Activated CD4-positive, alpha-beta T cell treated with anti-CD3 and anti-CD28 coated beads, Interleukin-2, amount 10 ng/mL, durations not matched to agents 24 days and 14 days (primary cell): ENCODE measurements at regions of chr2 and their contacts with region 1.

Region 1: DNA sequence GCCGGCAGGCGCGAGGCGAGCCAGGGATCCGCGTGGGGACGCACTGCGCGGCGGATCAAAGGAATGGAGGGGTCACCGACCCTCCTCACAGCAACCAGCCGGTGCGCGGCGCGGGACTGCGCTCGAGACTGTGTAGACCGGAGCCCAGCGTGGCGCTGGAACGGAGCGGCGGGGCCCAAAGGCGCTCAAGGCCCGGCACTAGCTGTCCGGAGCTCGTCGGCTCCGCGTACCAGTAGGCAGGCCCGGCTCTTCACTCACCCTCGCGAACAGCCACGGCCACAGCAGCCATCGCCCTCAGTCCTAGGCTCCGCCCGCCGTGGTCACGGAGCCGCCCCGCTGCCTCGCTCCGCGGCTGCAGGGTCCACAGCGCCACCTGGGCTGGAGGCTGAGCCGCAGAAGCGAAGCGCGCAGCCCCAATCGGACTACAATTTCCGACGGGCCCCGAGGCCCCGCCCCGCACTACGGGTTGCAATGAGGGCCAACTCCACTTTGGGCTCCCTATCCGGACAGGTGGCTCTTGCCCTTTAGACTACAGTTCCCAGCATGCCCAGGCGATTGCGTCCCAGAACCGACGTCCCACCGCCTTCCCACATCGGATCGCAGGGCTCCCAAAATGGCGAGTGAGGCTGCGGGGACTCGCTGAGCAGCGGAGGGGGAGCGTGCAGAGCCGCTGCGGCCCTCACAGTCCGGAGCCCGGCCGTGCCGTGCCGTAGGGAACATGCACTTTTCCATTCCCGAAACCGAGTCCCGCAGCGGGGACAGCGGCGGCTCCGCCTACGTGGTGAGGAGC is at the starts of genes EIF2B4 and SNX17:
- DNase-seq: peak; percentile 100
- H3K4me3 Mint-ChIP-seq: peak within 1 kb of the TSS; percentile 86
- H3K27ac Mint-ChIP-seq: peak within 1 kb of the TSS; percentile 98
- H3K4me1 Mint-ChIP-seq: peaks cover 34% of the 10 kb centered on the region
- H3K27me3 Mint-ChIP-seq: no peaks in the 10 kb centered on the region
- total RNA-seq, gene EIF2B4: 51.2 and 52.0 TPM in 2 replicates
- total RNA-seq, gene SNX17: 120 and 128 TPM in 2 replicates

Region 2: DNA sequence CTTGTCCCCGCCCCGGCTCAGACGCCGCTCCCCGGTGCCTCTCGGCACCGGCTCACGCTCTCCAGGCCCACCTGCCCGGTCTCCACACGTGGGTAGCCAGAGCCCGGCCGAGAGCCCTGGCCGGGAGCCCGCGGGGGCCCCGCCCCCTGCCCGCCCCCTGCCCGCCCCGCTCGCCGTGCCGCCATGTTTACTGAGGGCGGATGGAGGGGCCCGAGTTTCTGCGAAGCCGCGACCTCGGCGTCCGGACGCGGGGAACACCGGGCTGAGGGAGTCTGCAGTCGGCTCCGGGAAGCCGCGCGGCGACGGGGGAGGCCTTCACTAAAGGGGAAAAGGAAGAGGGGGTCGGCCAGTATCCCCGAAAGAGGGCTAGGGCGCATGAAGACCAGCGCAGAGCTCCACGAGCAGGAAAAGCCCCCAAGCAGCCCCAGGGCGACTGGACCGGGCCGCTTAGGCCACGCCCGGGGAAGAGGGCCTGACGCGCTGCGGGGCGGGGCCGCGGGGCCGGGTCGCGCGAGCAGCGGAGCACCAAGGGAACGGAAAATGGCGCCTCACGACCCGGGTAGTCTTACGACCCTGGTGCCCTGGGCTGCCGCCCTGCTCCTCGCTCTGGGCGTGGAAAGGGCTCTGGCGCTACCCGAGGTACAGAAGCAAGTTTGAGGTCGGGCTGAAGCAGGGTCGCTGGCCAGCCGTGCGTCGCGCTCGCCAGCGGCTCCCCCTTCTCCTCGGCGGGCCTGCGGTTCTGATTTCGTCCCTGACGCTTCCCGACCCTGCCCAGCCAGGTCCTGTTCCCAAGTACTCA is 158.2 kb before region 1 on chr2 and contains the starts of genes ATRAID and SLC5A6:
- intact Hi-C with region 1: loop called (anchors 1 kb)
- DNase-seq: peak; percentile 97
- H3K4me3 Mint-ChIP-seq: peak within 1 kb of the TSS; percentile 91
- H3K27ac Mint-ChIP-seq: peak within 1 kb of the TSS; percentile 99
- H3K4me1 Mint-ChIP-seq: peaks cover 40% of the 10 kb centered on the region
- H3K27me3 Mint-ChIP-seq: no peaks in the 10 kb centered on the region
- total RNA-seq, gene ATRAID: 109 and 120 TPM in 2 replicates
- total RNA-seq, gene SLC5A6: 87.1 and 97.9 TPM in 2 replicates

Region 3: GRCh38 chr2:27350106-27350693 is 20.0 kb before region 1 on chr2:
- intact Hi-C with region 1: no loop called
- DNase-seq: no peak
- H3K4me3 Mint-ChIP-seq: no peak overlapping the region
- H3K27ac Mint-ChIP-seq: no peak overlapping the region
- H3K4me1 Mint-ChIP-seq: peaks cover 29% of the 10 kb centered on the region
- H3K27me3 Mint-ChIP-seq: no peaks in the 10 kb centered on the region

Region 4: GRCh38 chr2:27380626-27381545 is 10.7 kb after region 1 on chr2 and contains the start of gene ZNF513:
- intact Hi-C with region 1: loop called (anchors 1 kb)
- DNase-seq: peak; percentile 97
- H3K4me3 Mint-ChIP-seq: peak within 1 kb of the TSS; percentile 95
- H3K27ac Mint-ChIP-seq: peak within 1 kb of the TSS; percentile 97
- H3K4me1 Mint-ChIP-seq: peaks cover 30% of the 10 kb centered on the region
- H3K27me3 Mint-ChIP-seq: no peaks in the 10 kb centered on the region
- total RNA-seq, gene ZNF513: 11.1 and 13.5 TPM in 2 replicates

Region 5: DNA sequence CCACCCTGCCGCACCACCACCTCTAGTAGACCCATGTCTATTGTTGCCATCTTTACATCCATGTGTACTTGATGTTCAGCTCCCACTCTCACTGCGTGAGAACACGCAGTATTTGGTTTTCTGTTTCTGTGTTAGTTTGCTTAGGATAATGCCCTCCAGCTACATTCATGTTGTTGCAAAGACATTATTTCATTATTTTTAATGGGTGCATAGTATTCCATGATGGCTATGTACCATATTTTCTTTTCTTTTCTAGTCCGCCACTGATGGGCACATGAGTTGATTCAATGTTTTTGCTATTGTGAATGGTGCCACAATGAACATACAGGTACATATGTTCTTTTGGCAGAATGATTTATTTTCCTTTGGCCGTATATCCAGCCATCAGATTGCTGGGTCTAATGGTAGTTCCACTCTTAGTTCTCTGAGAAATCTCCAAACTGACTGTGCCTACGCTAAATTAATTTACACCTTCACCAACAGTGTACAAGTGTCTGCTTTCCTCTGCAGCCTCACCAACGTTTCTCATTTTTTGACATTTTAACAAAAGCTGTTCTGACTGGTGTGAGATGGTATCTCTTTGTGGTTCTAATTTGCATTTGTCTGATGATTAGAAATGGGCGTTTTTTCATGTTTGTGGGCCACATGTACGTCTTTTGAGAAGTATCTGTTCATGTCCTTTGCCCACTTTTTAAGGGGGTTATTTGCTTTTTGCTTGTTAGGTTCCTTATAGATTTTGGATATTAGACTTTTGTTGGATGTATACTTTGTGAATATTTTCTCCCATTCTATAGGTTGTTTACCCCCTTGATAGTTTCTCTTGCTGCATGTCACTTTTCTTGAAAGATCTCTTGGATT is 20.8 kb after region 1 on chr2:
- intact Hi-C with region 1: no loop called
- DNase-seq: no peak
- H3K4me3 Mint-ChIP-seq: peak overlapping the region; percentile 30
- H3K27ac Mint-ChIP-seq: peak overlapping the region; percentile 71
- H3K4me1 Mint-ChIP-seq: peaks cover 23% of the 10 kb centered on the region
- H3K27me3 Mint-ChIP-seq: no peaks in the 10 kb centered on the region

Region 6: GRCh38 chr2:27428213-27428977 is 58.2 kb after region 1 on chr2 and contains the start of gene NRBP1:
- intact Hi-C with region 1: loop called (anchors 1 kb)
- DNase-seq: peak; percentile 99
- H3K4me3 Mint-ChIP-seq: peak within 1 kb of the TSS; percentile 97
- H3K27ac Mint-ChIP-seq: peak within 1 kb of the TSS; percentile 99
- H3K4me1 Mint-ChIP-seq: peaks cover 28% of the 10 kb centered on the region
- H3K27me3 Mint-ChIP-seq: peaks cover 2% of the 10 kb centered on the region
- total RNA-seq, gene NRBP1: 93.9 and 94.7 TPM in 2 replicates

Region 7: GRCh38 chr2:27520316-27520715 is 150.1 kb after region 1 on chr2:
- intact Hi-C with region 1: no loop called
- DNase-seq: no peak
- H3K4me3 Mint-ChIP-seq: no peak overlapping the region
- H3K27ac Mint-ChIP-seq: no peak overlapping the region
- H3K4me1 Mint-ChIP-seq: no peaks in the 10 kb centered on the region
- H3K27me3 Mint-ChIP-seq: peaks cover 6% of the 10 kb centered on the region

Region 8: GRCh38 chr2:27628767-27629709 is 258.8 kb after region 1 on chr2 and contains the starts of genes CCDC121 and GPN1:
- intact Hi-C with region 1: loop called (anchors 2 kb)
- DNase-seq: peak; percentile 98
- H3K4me3 Mint-ChIP-seq: no peak within 1 kb of the TSS
- H3K27ac Mint-ChIP-seq: no peak within 1 kb of the TSS
- H3K4me1 Mint-ChIP-seq: peaks cover 25% of the 10 kb centered on the region
- H3K27me3 Mint-ChIP-seq: no peaks in the 10 kb centered on the region
- total RNA-seq, gene CCDC121: 0.54 and 0.63 TPM in 2 replicates
- total RNA-seq, gene GPN1: 51.0 and 55.4 TPM in 2 replicates